ENCODE measurements at regions of chr11 and their contacts with region 1.

Region 1: GRCh38 chr11:6812390-6813005 is 13.0 kb upstream of the OR6A2 start:
- DNase-seq: peak in 2 of 5 donors; percentile 26 to 41
- H3K4me3 ChIP-seq: no peak overlapping the region
- H3K4me3 Mint-ChIP-seq: no peak overlapping the region
- H3K27ac ChIP-seq: no peak overlapping the region
- H3K27ac Mint-ChIP-seq: no peak overlapping the region
- H3K4me1 ChIP-seq: no peaks in the 10 kb centered on the region
- H3K4me1 Mint-ChIP-seq: peaks cover 0 to 3% (median 0%) of the 10 kb centered on the region in 3 donors
- H3K27me3 ChIP-seq: peaks cover 3% of the 10 kb centered on the region
- H3K27me3 Mint-ChIP-seq: peaks cover 14 to 54% of the 10 kb centered on the region in 2 donors

Region 2: GRCh38 chr11:6825231-6825744 is 12.8 kb after region 1 on chr11:
- CTCF ChIA-PET with region 1: interaction called, 14 read pairs
- POLR2A ChIA-PET with region 1: no interaction called
- DNase-seq: no peak
- H3K4me3 ChIP-seq: no peak overlapping the region
- H3K4me3 Mint-ChIP-seq: no peak overlapping the region
- H3K27ac ChIP-seq: no peak overlapping the region
- H3K27ac Mint-ChIP-seq: no peak overlapping the region
- H3K4me1 ChIP-seq: no peaks in the 10 kb centered on the region
- H3K4me1 Mint-ChIP-seq: no peaks in the 10 kb centered on the region
- H3K27me3 ChIP-seq: no peaks in the 10 kb centered on the region
- H3K27me3 Mint-ChIP-seq: peaks cover 9 to 24% of the 10 kb centered on the region in 2 donors

Measured in CD8-positive, alpha-beta memory T cell (primary cell).